Activated CD8-positive, alpha-beta T cell treated with anti-CD3 and anti-CD28 coated beads, Interleukin-2, amount 10 ng/mL, durations not matched to agents 7 days and 5 days (primary cell): ENCODE measurements at regions of chr11 and their contacts with region 1.

Region 1: DNA sequence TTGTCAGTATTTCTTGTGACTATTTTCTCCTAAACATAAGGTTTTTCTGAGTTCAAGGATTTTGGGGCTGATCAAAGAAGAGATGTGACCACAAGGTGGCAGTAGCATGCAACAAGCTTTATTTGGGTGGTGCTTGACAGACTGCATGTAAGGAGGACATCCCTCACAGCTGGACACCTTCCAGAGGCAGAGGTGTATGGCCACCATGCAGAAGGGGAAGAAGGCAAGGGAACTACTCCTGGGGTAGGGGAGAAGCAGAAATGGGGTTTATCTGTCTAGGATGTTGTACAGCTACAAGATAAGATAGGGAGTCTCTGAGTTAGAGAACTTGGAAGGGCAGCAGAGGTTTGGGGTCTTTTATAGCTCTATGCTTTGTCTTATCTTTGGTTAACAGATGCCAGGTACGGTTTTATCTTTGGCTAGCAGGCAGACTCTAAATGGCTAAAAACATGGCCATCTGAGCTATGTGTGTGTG is 5.1 kb upstream of the BIRC2 start:
- DNase-seq: peak; percentile 86
- ATAC-seq: peak; percentile 69
- H3K4me3 Mint-ChIP-seq: no peak overlapping the region
- H3K27ac Mint-ChIP-seq: no peak overlapping the region
- H3K4me1 Mint-ChIP-seq: peaks cover 21% of the 10 kb centered on the region
- H3K27me3 Mint-ChIP-seq: no peaks in the 10 kb centered on the region

Region 2: DNA sequence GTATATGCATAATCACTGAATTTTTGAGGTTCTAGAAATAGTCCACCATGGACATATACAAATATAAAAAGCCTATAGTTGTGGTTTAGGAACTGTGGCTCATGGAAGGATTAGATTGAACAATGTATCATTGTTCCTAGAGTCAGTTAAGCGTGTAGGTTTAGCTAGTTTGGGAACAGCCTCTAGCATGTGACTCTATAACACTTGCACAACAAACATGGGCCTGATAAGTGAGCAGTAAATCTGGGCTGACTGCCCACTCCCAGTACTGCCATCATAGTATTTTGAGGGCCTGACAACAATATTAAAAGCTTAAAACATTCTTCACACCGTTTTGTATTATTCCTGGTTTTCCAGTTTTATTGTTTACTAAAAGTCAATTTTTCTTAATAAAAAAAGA is 184.7 kb before region 1 on chr11:
- CTCF ChIA-PET with region 1: no interaction called
- POLR2A ChIA-PET with region 1: no interaction called
- DNase-seq: no peak
- ATAC-seq: no peak
- H3K4me3 Mint-ChIP-seq: no peak overlapping the region
- H3K27ac Mint-ChIP-seq: no peak overlapping the region
- H3K4me1 Mint-ChIP-seq: no peaks in the 10 kb centered on the region
- H3K27me3 Mint-ChIP-seq: peaks cover 2% of the 10 kb centered on the region

Region 3: DNA sequence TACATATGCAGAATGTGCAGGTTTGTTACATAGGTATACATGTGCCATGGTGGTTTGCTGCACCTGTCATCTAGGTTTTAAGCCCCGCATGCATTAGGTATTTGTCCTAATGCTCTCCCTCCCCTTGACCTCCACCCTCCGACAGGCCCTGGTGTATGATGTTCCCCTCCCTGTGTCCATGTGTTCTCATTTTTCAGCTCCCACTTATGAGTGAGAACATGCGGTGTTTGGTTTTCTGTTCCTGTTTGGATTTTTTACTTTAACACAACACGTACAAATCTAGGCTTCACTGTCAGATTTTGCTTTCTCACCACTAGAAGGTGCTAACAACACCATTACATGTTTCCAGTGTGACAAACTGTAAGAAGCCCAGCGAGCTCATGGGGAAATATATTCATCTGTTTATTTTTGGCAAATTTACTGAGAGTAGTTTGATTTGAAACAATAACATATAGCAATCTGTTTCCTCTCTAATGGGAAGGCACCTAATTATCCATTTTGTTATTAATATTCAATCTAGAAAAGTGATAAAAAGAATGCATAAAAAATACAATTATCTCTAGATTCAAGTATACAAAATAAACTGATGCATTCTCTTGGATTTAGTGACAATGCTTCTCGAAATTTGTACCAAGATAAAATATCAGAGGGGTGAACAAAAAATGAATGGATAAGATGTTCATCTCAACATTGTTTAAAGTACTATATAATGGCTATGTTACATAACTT is 47.8 kb before region 1 on chr11:
- CTCF ChIA-PET with region 1: interaction called, 157 read pairs
- POLR2A ChIA-PET with region 1: no interaction called
- DNase-seq: peak; percentile 51
- ATAC-seq: peak; percentile 91
- H3K4me3 Mint-ChIP-seq: peak overlapping the region; percentile 73
- H3K27ac Mint-ChIP-seq: peak overlapping the region; percentile 88
- H3K4me1 Mint-ChIP-seq: peaks cover 25% of the 10 kb centered on the region
- H3K27me3 Mint-ChIP-seq: no peaks in the 10 kb centered on the region

Region 4: DNA sequence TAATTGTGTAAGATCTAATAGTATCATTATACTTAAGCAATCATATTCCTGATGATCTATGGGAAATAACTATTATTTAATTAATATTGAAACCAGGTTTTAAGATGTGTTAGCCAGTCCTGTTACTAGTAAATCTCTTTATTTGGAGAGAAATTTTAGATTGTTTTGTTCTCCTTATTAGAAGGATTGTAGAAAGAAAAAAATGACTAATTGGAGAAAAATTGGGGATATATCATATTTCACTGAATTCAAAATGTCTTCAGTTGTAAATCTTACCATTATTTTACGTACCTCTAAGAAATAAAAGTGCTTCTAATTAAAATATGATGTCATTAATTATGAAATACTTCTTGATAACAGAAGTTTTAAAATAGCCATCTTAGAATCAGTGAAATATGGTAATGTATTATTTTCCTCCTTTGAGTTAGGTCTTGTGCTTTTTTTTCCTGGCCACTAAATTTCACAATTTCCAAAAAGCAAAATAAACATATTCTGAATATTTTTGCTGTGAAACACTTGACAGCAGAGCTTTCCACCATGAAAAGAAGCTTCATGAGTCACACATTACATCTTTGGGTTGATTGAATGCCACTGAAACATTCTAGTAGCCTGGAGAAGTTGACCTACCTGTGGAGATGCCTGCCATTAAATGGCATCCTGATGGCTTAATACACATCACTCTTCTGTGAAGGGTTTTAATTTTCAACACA is 18.2 kb before region 1 on chr11:
- CTCF ChIA-PET with region 1: interaction called, 32 read pairs
- POLR2A ChIA-PET with region 1: interaction called, 3 read pairs
- DNase-seq: no peak
- ATAC-seq: no peak
- H3K4me3 Mint-ChIP-seq: no peak overlapping the region
- H3K27ac Mint-ChIP-seq: no peak overlapping the region
- H3K4me1 Mint-ChIP-seq: peaks cover 56% of the 10 kb centered on the region
- H3K27me3 Mint-ChIP-seq: no peaks in the 10 kb centered on the region

Region 5: DNA sequence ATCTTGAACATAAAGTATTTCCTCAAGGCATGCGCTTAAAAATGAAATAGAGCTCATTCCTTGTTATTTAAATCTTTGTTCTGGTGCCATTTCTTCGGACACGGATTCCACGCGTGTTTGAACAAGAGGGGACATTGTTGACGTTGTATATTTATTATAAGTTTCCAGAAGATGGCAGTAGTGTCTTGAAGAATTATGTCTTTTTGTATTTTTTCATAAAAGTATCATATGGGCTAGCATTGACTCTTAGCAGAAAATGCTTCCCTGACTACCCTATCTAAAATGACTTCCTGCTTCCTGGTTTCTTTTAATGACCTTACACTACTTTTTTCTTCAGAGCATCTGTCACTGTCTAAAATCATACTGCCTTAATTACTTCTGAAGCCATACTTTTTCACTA is 25.5 kb after region 1 on chr11:
- CTCF ChIA-PET with region 1: interaction called, 21 read pairs
- POLR2A ChIA-PET with region 1: no interaction called
- DNase-seq: no peak
- ATAC-seq: peak; percentile 64
- H3K4me3 Mint-ChIP-seq: no peak overlapping the region
- H3K27ac Mint-ChIP-seq: peak overlapping the region; percentile 37
- H3K4me1 Mint-ChIP-seq: peaks cover 29% of the 10 kb centered on the region
- H3K27me3 Mint-ChIP-seq: no peaks in the 10 kb centered on the region

Region 6: DNA sequence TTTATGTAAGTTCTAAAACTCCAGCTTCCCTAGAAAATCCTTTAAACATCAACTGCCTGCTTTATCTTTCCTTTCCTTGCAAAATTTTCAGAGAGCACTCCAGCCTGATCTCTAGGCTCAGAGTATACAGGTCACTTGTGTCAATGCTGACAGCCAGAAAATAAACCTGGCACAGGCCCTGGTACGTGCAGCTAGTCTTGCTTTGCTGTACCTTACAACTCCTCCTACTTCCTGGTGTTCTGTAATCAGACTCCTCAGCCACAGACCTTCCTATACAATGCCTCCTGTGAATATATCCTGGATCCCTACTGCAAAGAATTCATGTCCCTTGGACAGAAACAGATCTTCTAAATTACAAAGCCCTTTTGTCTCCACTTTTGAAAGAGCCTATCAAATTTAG is 134.9 kb after region 1 on chr11:
- CTCF ChIA-PET with region 1: interaction called, 17 read pairs
- POLR2A ChIA-PET with region 1: no interaction called
- DNase-seq: peak; percentile 69
- ATAC-seq: peak; percentile 97
- H3K4me3 Mint-ChIP-seq: peak overlapping the region; percentile 12
- H3K27ac Mint-ChIP-seq: peak overlapping the region; percentile 90
- H3K4me1 Mint-ChIP-seq: peaks cover 57% of the 10 kb centered on the region
- H3K27me3 Mint-ChIP-seq: no peaks in the 10 kb centered on the region

Region 7: DNA sequence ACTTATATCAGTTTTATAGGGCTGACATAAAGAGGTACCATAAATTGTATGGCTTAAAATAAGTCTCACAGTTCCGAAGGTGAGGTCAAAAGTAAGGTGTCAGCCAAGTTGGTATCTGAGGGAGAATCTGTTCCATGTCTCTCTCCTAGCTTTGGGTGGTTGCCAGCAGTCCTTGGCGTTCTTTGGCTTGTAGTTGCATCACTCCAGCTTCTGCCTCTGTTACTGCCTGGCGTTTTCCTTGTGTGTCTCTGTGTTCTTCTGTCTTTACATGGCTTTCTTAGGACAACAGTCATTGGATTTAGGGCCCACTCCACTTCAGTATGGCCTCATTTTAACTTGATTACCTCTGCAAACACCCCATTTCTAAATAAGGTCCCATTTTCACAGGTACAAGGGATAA is 172.0 kb after region 1 on chr11:
- CTCF ChIA-PET with region 1: interaction called, 11 read pairs
- POLR2A ChIA-PET with region 1: no interaction called
- DNase-seq: no peak
- ATAC-seq: no peak
- H3K4me3 Mint-ChIP-seq: no peak overlapping the region
- H3K27ac Mint-ChIP-seq: no peak overlapping the region
- H3K4me1 Mint-ChIP-seq: no peaks in the 10 kb centered on the region
- H3K27me3 Mint-ChIP-seq: peaks cover 8% of the 10 kb centered on the region